ENCODE measurements at regions of chr6 and their contacts with region 1.

Region 1: GRCh38 chr6:73285674-73286283 is 22.8 kb upstream of the KHDC1 start:
- DNase-seq: no peak
- H3K4me3 ChIP-seq: no peak overlapping the region
- H3K27ac ChIP-seq: no peak overlapping the region
- H3K4me1 ChIP-seq: no peaks in the 10 kb centered on the region
- H3K27me3 ChIP-seq: no peaks in the 10 kb centered on the region
- CTCF ChIP-seq: peak; percentile 24 to 55 (median 45)

Region 2: GRCh38 chr6:73329201-73329600 is 43.4 kb after region 1 on chr6:
- intact Hi-C with region 1: loop called (anchors 1 kb)
- DNase-seq: no peak
- H3K4me3 ChIP-seq: no peak overlapping the region
- H3K27ac ChIP-seq: no peak overlapping the region
- H3K4me1 ChIP-seq: no peaks in the 10 kb centered on the region
- H3K27me3 ChIP-seq: no peaks in the 10 kb centered on the region
- CTCF ChIP-seq: no peak

Region 3: GRCh38 chr6:73388800-73389512 is 103.2 kb after region 1 on chr6:
- intact Hi-C with region 1: loop called (anchors 5 kb)
- DNase-seq: peak in 1 of 2 donors; percentile 72
- H3K4me3 ChIP-seq: peak overlapping the region; percentile 58 to 66
- H3K27ac ChIP-seq: peak overlapping the region; percentile 58 to 78
- H3K4me1 ChIP-seq: no peaks in the 10 kb centered on the region
- H3K27me3 ChIP-seq: no peaks in the 10 kb centered on the region
- CTCF ChIP-seq: peak; percentile 14 to 67 (median 52)

Measured in ascending aorta (tissue), 2 donors.